ENCODE measurements at regions of chr11 and their contacts with region 1.

Region 1: DNA sequence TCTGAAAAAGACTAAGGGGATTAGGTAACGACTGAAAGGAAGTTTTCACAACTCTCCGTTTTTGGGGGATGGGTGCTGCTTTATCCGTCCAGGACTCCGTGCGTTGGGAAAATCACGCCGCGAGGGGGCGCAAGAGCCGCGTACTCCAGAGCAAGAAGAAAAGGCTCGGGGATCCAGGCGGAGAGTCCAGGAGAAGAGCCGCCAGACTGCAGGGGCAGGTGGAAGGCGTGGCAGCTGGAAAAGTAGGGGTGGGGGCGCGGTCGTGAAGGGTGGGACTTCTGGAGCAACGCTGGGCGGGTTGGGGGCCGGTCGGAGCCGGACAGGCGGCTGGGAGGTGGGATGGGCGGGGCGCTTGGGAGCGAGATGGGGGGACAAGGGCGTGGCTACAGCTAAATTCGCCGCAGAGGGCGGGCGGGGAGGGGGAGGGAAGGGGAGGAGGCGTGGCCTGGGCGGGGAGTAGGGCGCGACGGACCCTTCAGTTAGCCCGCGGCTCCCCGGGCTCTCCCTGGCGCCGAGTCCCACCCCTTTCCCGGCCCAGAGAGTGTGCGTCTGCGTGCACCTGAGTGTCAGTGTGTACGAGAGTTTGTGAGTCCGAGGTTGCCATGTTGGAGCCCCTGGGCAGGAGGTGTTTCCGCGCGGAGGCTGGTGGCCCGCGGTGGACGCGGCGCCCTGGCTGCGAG is 613 bp upstream of the ARHGEF17 start:
- DNase-seq: peak; percentile 99
- ATAC-seq: peak; percentile 71

Region 2: GRCh38 chr11:73114110-73114824 is 193.2 kb before region 1 on chr11:
- intact Hi-C with region 1: no loop called
- DNase-seq: no peak
- ATAC-seq: no peak

Region 3: GRCh38 chr11:73242251-73243079 is 65.0 kb before region 1 on chr11:
- intact Hi-C with region 1: no loop called
- DNase-seq: peak; percentile 86
- ATAC-seq: peak; percentile 59

Region 4: GRCh38 chr11:73323464-73323863 is 16.0 kb after region 1 on chr11:
- intact Hi-C with region 1: loop called (anchors 2 kb)
- DNase-seq: peak; percentile 80
- ATAC-seq: peak; percentile 53

Region 5: GRCh38 chr11:73335204-73335923 is 27.9 kb after region 1 on chr11:
- intact Hi-C with region 1: loop called (anchors 1 kb)
- DNase-seq: peak; percentile 87
- ATAC-seq: peak; percentile 67

Region 6: DNA sequence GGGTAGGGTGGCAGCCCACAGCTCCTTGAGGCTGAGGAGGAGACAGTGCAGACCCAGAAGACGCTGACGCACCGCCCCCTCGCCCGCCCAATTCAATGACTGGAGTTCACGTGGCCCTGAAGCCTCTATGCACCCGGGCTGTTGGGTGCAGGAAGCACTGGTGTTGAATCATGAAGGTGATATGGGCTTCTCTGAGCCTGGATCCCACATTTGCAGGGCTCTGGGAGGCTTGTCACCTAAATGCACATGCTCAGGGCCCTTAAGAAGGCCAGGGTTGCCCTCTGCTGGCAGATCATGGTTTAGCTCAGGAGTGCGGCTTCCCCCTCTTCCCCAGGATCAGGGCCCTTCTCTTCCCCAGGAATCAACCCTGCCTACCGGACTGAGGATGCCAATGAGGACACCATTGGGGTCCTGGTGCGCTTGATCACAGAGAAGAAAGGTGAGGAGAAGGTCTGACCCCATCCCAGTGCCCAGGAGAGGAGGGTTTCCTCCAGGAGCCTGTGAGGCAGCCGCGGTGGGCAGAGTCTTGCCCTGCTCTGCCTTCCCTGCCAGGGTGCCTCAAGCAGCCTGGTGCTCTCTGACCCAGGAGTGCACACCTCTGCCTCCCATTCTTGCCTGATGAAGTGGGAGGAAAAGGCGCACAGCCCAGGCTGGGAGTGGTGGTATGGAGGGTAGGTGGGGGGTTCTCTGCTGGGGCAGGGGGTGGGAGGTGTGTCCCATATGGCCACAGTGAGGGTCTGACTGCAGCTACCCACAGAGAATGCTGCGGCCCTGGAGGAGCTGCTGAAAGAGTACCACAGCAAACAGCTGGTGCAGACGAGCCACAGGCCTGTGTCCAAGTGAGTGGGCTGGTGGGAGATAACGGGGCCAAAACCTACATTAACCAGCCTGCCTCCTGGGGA is 86.3 kb after region 1 on chr11:
- intact Hi-C with region 1: loop called (anchors 2 kb)
- DNase-seq: peak; percentile 84
- ATAC-seq: peak; percentile 64